Ascending aorta (tissue), 2 donors: ENCODE measurements at regions of chrX and their contacts with region 1.

Region 1: GRCh38 chrX:102155806-102156179 is at the start of gene BEX5:
- DNase-seq: peak; percentile 21 to 83
- H3K4me3 ChIP-seq: peak within 1 kb of the TSS; percentile 39 to 70
- H3K27ac ChIP-seq: peak within 1 kb of the TSS; percentile 74 to 81
- H3K4me1 ChIP-seq: no peaks in the 10 kb centered on the region
- H3K27me3 ChIP-seq: no peaks in the 10 kb centered on the region
- CTCF ChIP-seq: no peak
- total RNA-seq, gene BEX5: not detected

Region 2: DNA sequence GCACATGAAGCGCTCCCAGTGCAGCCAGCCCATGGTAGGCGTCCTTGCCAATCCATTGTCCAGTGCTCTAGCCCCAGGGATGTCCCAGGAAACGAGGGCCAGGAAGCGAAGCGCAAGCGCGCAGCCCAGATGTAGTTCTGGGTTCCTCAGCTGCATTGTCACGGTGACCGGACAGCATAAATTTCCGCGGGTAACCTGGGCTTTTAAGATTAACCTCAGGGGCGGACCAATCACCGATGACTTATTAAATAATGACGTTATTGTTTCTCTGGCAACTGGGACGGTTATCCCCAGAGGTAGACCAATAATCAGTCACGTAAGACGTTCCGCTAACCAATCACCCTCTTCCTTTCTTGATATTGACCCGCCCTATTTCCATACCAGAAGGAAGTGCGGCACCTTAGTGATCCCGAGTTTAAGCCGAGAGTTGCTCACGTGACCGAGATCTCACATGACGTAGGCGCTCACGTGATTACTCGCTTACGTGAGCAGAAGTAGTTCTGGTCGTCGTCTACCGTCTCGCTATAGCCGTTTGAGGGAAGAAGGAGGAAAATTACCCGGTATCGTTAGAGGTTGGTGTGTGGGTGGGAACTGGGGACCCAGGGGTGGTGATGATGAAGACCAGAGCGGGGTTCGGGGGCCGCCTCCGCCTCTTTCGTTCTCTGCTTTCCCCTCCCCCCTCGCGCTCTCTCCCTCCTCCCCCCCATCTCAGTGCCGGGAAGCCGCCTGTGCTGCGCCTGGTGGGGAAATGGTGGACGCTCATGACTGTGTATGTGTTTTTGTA is 747.9 kb before region 1 on chrX and contains the starts of genes GLA and HNRNPH2:
- intact Hi-C with region 1: loop called (anchors 2 kb)
- DNase-seq: peak; percentile 84 to 96
- H3K4me3 ChIP-seq: peak within 1 kb of the TSS; percentile 68 to 81
- H3K27ac ChIP-seq: peak within 1 kb of the TSS; percentile 92 to 93
- H3K4me1 ChIP-seq: peaks cover 0 to 3% of the 10 kb centered on the region in 2 donors
- H3K27me3 ChIP-seq: no peaks in the 10 kb centered on the region
- CTCF ChIP-seq: no peak
- total RNA-seq, gene GLA: 9.0 TPM
- total RNA-seq, gene HNRNPH2: 21.4 TPM

Region 3: DNA sequence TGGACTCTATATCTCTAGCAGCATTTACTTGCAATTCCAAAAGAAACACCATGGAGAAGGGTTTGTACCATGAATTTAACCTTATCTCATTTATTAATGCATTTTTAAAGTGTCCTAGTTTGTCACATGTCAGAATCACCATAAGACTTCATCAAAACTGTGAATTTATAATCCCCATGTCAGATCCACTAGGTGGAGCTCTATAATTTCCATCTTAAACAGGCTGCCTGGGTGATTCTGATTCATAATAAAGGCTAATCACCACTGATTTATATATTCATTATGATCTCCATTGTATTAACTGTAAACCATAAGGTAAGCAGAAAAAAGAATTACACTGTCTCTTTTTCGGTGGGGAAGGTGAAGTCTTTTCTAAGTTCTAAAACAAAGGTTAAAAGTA is 26.3 kb before region 1 on chrX:
- intact Hi-C with region 1: loop called (anchors 5 kb)
- DNase-seq: no peak
- H3K4me3 ChIP-seq: no peak overlapping the region
- H3K27ac ChIP-seq: no peak overlapping the region
- H3K4me1 ChIP-seq: no peaks in the 10 kb centered on the region
- H3K27me3 ChIP-seq: no peaks in the 10 kb centered on the region
- CTCF ChIP-seq: peak in 2 of 3 experiments; percentile 26 to 37

Region 4: DNA sequence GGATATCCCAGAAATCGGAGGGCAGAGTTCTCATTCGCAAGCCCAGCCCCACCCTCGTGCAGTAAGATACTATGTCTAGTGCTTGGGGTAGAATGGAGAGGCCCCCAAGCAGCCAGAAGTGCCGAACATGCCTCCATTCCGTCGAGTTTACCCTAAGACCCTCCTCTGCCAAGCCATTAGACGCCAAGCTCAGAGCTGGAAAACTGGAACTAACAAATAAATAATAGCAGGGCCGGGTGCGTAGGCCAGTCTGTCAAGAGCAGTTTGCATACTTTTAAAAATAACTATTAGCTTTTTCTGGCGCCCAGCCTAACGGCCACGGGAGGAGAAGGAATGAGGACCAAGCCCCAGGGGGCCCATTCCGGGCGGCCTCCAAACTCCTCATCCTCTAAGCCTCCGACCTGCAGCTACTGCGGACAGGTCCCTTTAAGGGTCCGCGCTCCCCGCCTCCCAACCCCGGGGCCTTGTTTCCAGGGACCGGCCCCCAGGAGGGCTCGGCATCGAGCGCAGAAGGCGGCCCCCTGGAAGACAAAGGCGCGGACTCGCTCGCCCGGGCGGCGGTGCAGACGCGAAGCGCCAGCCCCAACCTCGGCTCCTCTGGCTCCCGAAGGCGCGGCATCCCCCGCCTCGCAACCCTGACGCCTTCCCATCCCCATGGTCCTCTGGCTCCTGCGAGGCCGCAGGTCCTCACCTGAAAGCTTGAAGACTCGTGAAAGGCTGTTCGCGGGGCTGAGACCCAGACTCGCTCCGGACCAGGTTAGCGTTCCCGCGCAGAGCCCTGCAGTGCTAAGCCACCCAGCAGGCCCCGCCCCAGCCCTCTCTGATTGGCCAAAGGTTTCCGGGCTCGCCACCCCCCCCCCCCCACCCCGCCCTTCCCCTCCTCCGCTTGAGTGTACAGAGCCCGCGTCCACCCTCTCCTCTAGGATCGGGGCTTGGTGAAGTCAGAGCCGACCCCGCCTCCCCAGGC is 360.5 kb after region 1 on chrX and contains the start of gene TMSB15A:
- intact Hi-C with region 1: loop called (anchors 5 kb)
- DNase-seq: peak in 1 of 2 donors; percentile 79
- H3K4me3 ChIP-seq: peak within 1 kb of the TSS; percentile 43 to 64
- H3K27ac ChIP-seq: peak within 1 kb of the TSS; percentile 50 to 73
- H3K4me1 ChIP-seq: no peaks in the 10 kb centered on the region
- H3K27me3 ChIP-seq: no peaks in the 10 kb centered on the region
- CTCF ChIP-seq: no peak
- total RNA-seq, gene TMSB15A: not detected

Region 5: DNA sequence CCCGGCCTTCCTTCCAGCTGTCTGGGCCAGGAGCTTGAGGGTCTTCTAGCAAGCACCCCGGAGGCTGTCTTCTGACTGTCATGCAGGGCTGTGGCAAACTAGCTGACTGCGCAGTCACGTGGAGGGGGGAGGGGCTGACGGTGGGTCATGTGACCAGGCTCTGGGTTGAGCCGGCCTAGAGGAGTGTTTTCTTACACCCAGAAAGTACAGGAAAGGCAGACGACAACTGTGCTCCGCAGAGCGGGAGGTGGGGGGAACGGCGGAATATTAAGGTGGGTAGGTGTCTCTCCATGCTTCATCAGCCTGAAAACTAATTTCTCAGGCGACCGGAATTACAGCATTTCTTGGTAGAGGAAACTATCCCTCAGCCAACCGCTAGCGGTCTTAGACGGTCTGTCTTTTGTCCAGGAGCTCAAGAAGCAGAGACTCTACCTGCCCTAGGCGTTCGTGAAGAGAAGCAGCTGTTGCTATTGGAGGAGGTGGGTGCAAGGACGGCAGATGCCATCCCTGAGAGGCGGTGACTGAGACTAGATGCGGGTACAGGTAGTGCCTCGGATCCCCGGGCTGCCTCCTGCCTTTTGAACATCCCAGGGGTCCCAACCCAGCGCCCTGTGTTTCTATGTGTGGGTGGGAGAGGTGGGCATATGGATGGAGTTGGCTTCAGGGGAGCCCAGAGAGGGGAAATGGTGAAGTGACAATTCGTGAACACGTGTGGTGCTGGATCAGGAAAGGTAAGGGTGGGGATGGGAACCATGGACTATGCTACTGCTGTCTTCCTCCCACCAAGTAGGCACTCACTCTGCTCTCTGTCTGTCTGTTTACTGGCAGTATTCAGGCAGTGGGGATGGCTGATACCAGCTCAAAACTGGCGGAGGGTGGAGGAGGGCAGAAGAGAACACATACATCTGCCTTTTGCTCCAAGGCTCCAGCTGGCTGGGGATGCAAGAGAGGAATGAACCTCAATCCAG is 504.3 kb after region 1 on chrX:
- intact Hi-C with region 1: loop called (anchors 10 kb)
- DNase-seq: peak; percentile 64 to 91
- H3K4me3 ChIP-seq: peak overlapping the region; percentile 48 to 63
- H3K27ac ChIP-seq: peak overlapping the region in 1 of 2 donors; percentile 44
- H3K4me1 ChIP-seq: no peaks in the 10 kb centered on the region
- H3K27me3 ChIP-seq: no peaks in the 10 kb centered on the region
- CTCF ChIP-seq: peak in 1 of 3 experiments; percentile 26

Region 6: DNA sequence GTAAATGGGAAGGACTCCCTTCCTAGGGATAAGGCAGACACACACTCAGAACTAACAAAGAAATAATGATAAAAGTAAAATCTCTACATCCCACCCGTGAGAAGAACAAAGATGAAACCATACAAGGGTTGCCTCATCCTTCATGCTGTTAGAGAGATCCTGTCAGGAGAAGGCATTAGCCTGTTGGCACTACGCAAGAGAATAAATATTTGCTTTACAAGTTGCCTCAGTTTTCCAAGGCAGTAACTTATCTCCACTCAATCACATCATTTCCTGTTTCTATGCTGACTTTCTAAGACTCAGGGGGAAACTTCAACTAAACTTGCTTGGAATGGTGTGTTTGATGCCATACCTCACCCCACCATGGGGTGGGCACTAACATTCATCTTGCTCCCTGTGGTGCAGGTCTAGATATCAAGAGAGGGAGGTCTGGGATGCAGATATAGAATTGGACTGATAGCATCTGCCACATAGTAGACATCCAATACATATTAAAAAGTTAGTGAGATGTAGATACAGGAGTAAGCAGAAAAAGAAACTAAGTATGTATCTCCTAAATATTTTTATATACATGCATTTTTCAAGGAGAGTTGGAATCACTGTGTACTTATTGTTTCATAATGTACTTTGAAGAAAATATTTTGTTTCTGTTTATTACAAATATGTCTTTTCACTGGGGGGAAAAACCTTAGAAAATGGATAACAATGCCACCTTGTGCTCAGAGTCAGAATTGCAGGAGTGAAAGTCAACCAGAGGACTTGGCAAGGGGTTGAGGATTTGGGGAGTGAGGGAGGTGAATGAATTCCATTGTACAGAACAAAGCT is 1001.9 kb after region 1 on chrX:
- intact Hi-C with region 1: loop called (anchors 10 kb)
- DNase-seq: no peak
- H3K4me3 ChIP-seq: no peak overlapping the region
- H3K27ac ChIP-seq: no peak overlapping the region
- H3K4me1 ChIP-seq: no peaks in the 10 kb centered on the region
- H3K27me3 ChIP-seq: no peaks in the 10 kb centered on the region
- CTCF ChIP-seq: peak in 2 of 3 experiments; percentile 50 to 69